Ascending aorta (tissue), 2 donors: ENCODE measurements at regions of chr20 and their contacts with region 1.

Region 1: GRCh38 chr20:41693136-41693979 is 75.2 kb upstream of the CHD6 start:
- DNase-seq: peak; percentile 38 to 88
- H3K4me3 ChIP-seq: peak overlapping the region; percentile 65 to 76
- H3K27ac ChIP-seq: peak overlapping the region; percentile 82 to 93
- H3K4me1 ChIP-seq: peaks cover 0 to 5% of the 10 kb centered on the region in 2 donors
- H3K27me3 ChIP-seq: no peaks in the 10 kb centered on the region
- CTCF ChIP-seq: peak; percentile 34 to 55 (median 53)

Region 2: GRCh38 chr20:40293740-40294139 is 1399.6 kb before region 1 on chr20:
- intact Hi-C with region 1: loop called (anchors 10 kb)
- DNase-seq: peak in 1 of 2 donors; percentile 84
- H3K4me3 ChIP-seq: no peak overlapping the region
- H3K27ac ChIP-seq: peak overlapping the region; percentile 70 to 77
- H3K4me1 ChIP-seq: peaks cover 0 to 18% of the 10 kb centered on the region in 2 donors
- H3K27me3 ChIP-seq: no peaks in the 10 kb centered on the region
- CTCF ChIP-seq: no peak

Region 3: DNA sequence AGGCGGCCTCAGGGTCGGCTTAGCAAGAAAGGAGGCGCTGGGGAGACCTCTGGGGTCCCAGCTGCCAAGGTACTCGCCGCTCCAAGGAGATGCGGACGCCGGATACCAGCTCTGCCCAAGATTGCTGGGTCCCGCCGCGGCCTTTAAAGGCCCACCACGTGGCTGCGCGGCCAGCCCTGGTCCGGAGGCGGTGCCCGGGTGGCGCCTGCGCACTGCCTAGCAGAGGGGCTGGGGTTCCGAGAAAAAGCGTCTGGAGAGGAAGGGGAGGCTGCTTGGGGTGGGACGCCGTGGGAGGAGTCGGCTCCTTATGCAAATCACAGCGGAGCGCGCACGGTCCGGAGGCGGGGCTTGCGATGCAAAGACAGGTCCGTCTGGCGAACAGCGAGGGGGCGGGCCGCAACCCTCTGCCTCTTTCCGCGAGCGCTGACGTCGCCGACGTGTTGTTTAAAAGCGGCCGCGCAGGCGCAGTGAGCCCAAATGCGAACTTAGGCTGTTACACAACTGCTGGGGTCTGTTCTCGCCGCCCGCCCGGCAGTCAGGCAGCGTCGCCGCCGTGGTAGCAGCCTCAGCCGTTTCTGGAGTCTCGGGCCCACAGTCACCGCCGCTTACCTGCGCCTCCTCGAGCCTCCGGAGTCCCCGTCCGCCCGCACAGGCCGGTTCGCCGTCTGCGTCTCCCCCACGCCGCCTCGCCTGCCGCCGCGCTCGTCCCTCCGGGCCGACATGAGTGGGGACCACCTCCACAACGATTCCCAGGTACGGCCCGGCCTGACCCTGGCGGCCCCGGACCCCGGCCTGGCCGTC is 664.8 kb before region 1 on chr20 and contains the start of gene TOP1:
- intact Hi-C with region 1: loop called (anchors 2 kb)
- DNase-seq: peak; percentile 100
- H3K4me3 ChIP-seq: peak within 1 kb of the TSS; percentile 90 to 99
- H3K27ac ChIP-seq: peak within 1 kb of the TSS; percentile 95 to 100
- H3K4me1 ChIP-seq: peaks cover 10 to 34% of the 10 kb centered on the region in 2 donors
- H3K27me3 ChIP-seq: no peaks in the 10 kb centered on the region
- CTCF ChIP-seq: peak in 1 of 3 experiments; percentile 10
- total RNA-seq, gene TOP1: 9.4 TPM

Region 4: GRCh38 chr20:41476013-41476752 is 217.2 kb before region 1 on chr20:
- intact Hi-C with region 1: loop called (anchors 5 kb)
- DNase-seq: no peak
- H3K4me3 ChIP-seq: no peak overlapping the region
- H3K27ac ChIP-seq: peak overlapping the region in 1 of 2 donors; percentile 20
- H3K4me1 ChIP-seq: no peaks in the 10 kb centered on the region
- H3K27me3 ChIP-seq: no peaks in the 10 kb centered on the region
- CTCF ChIP-seq: no peak

Region 5: DNA sequence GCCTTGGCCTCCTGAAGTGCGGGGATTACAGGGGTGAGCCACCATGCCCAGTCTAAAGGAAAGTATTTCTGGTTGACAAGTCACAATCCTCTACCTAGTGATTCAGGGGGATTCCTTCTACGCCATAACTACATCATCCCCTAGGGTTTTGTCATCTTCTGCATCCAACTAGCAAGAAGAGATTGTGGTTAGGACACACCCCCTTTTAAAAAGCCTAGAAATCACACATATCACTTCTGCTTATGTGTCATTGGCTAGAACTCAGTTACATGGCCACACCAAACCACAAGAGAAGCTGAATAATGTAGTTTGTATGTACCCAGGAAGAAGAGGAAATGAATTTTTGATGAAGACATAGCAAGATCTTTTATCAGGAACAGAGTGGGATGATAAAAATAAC is 60.5 kb before region 1 on chr20:
- intact Hi-C with region 1: loop called (anchors 2 kb)
- DNase-seq: no peak
- H3K4me3 ChIP-seq: no peak overlapping the region
- H3K27ac ChIP-seq: peak overlapping the region in 1 of 2 donors; percentile 74
- H3K4me1 ChIP-seq: no peaks in the 10 kb centered on the region
- H3K27me3 ChIP-seq: no peaks in the 10 kb centered on the region
- CTCF ChIP-seq: no peak

Region 6: GRCh38 chr20:41654884-41655283 is 38.5 kb before region 1 on chr20:
- intact Hi-C with region 1: no loop called
- DNase-seq: no peak
- H3K4me3 ChIP-seq: no peak overlapping the region
- H3K27ac ChIP-seq: no peak overlapping the region
- H3K4me1 ChIP-seq: no peaks in the 10 kb centered on the region
- H3K27me3 ChIP-seq: no peaks in the 10 kb centered on the region
- CTCF ChIP-seq: no peak